ENCODE measurements at regions of chr2 and their contacts with region 1.

Region 1: GRCh38 chr2:213145715-213146242 is 5.6 kb downstream of the IKZF2 start:
- DNase-seq: no peak
- H3K4me3 ChIP-seq: no peak overlapping the region
- H3K27ac ChIP-seq: no peak overlapping the region
- H3K4me1 ChIP-seq: peaks cover 0 to 50% (median 8%) of the 10 kb centered on the region in 4 donors
- H3K27me3 ChIP-seq: no peaks in the 10 kb centered on the region
- CTCF ChIP-seq: no peak

Region 2: GRCh38 chr2:213166109-213166508 is 20.3 kb after region 1 on chr2:
- intact Hi-C with region 1: loop called (anchors 2 kb)
- DNase-seq: no peak
- H3K4me3 ChIP-seq: no peak overlapping the region
- H3K27ac ChIP-seq: no peak overlapping the region
- H3K4me1 ChIP-seq: peaks cover 0 to 17% (median 5%) of the 10 kb centered on the region in 4 donors
- H3K27me3 ChIP-seq: no peaks in the 10 kb centered on the region
- CTCF ChIP-seq: no peak